ENCODE measurements at regions of chr6 and their contacts with region 1.

Region 1: GRCh38 chr6:132813173-132813856 is 1.1 kb upstream of the RPS12 start:
- DNase-seq: no peak
- H3K4me3 Mint-ChIP-seq: peak overlapping the region; percentile 89
- H3K27ac Mint-ChIP-seq: peak overlapping the region; percentile 90
- H3K4me1 Mint-ChIP-seq: peaks cover 42% of the 10 kb centered on the region
- H3K27me3 Mint-ChIP-seq: peaks cover 16% of the 10 kb centered on the region

Region 2: DNA sequence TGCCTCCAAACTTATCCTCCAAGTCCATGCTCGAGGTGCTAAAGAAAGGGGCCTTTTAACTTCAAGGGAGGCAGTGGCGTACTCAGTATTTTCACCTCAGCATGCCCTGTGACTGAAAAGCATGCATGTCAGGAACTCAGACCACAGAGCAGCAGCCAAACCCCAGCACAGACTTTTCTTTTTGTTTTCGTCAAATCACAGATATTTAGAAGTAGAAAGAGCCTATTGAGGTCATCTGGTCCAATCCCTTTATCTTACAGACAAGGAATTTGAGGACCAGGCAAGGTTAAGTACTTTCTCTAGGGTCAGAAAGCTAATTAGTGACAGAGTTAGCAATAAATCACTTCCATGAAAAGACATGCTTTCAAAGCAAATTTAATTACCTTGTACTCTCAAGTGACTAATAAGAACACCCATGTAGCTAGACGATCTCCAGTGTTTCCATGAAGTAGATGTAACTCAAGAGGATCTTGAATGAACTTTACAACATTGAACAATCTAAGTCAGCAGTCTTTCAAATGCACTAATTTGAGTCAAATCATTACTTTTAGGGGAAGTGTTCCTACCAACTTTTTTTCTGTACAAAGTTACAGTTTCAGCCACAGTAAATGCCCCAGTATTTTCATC is 447.9 kb before region 1 on chr6:
- intact Hi-C with region 1: loop called (anchors 5 kb)
- DNase-seq: no peak
- H3K4me3 Mint-ChIP-seq: peak overlapping the region; percentile 45
- H3K27ac Mint-ChIP-seq: peak overlapping the region; percentile 84
- H3K4me1 Mint-ChIP-seq: peaks cover 37% of the 10 kb centered on the region
- H3K27me3 Mint-ChIP-seq: peaks cover 19% of the 10 kb centered on the region

Region 3: GRCh38 chr6:132530293-132530974 is 282.9 kb before region 1 on chr6:
- intact Hi-C with region 1: loop called (anchors 5 kb)
- DNase-seq: peak; percentile 45
- H3K4me3 Mint-ChIP-seq: no peak overlapping the region
- H3K27ac Mint-ChIP-seq: no peak overlapping the region
- H3K4me1 Mint-ChIP-seq: no peaks in the 10 kb centered on the region
- H3K27me3 Mint-ChIP-seq: peaks cover 29% of the 10 kb centered on the region

Region 4: DNA sequence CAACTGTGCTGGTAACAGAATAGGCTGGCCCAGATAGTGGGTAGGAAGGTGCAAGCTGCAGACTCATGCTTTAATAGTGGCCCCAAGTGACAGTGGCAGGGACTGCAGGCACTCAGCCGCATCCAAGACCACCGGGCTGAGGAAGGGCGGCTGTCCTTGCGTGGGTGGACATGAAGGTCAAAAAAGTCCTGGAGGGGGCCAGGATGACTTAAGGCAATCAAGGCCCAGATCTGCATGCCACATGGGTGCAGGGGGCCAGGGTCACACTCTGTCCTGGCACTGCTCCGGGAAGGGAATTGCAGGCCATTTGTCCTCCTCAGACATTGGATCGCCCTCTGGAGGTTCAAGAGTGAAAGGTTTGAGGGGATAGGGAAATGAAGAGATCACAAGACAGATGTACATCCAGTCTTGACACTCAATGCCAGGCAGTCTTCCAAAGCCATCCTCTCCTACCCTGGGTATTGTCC is 45.2 kb before region 1 on chr6:
- intact Hi-C with region 1: loop called (anchors 2 kb)
- DNase-seq: no peak
- H3K4me3 Mint-ChIP-seq: no peak overlapping the region
- H3K27ac Mint-ChIP-seq: no peak overlapping the region
- H3K4me1 Mint-ChIP-seq: peaks cover 16% of the 10 kb centered on the region
- H3K27me3 Mint-ChIP-seq: no peaks in the 10 kb centered on the region

Region 5: GRCh38 chr6:133952815-133953633 is 1139.7 kb after region 1 on chr6 and contains the start of gene TBPL1:
- intact Hi-C with region 1: loop called (anchors 2 kb)
- DNase-seq: peak; percentile 76
- H3K4me3 Mint-ChIP-seq: peak within 1 kb of the TSS; percentile 95
- H3K27ac Mint-ChIP-seq: peak within 1 kb of the TSS; percentile 90
- H3K4me1 Mint-ChIP-seq: peaks cover 48% of the 10 kb centered on the region
- H3K27me3 Mint-ChIP-seq: peaks cover 10% of the 10 kb centered on the region
- total RNA-seq, gene TBPL1: 40.5 and 42.2 TPM in 2 replicates